B cell (primary cell): ENCODE measurements at regions of chr2 and their contacts with region 1.

Region 1: GRCh38 chr2:112884869-112885505 is 26.0 kb upstream of the IL37 start:
- DNase-seq: peak; percentile 65
- ATAC-seq: peak; percentile 75
- H3K4me3 ChIP-seq: no peak overlapping the region
- H3K4me3 Mint-ChIP-seq: no peak overlapping the region
- H3K27ac ChIP-seq: no peak overlapping the region
- H3K27ac Mint-ChIP-seq: no peak overlapping the region
- H3K4me1 ChIP-seq: peaks cover 7 to 15% of the 10 kb centered on the region in 2 donors
- H3K4me1 Mint-ChIP-seq: peaks cover 14% of the 10 kb centered on the region
- H3K27me3 ChIP-seq: no peaks in the 10 kb centered on the region
- H3K27me3 Mint-ChIP-seq: no peaks in the 10 kb centered on the region
- CTCF ChIP-seq: peak; percentile 90

Region 2: DNA sequence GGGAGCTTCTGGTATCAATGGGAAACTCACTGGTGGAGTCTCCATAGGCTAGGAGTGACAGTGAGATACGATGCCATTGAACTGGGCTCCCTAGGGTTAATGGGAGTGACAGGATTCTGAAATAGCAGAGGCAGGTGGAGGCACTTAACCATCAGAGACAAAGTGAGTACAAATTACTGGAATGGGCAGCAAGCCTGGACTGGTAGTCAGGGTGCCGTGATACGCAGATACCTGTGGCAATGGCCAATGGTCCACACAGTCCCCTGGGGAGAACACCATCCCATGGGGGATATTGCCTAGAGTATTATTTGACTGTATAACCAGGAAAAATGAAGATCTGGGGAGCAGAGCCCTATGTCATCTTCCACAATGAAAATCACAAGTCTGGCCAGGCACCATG is 283.2 kb before region 1 on chr2:
- CTCF ChIA-PET with region 1: interaction called, 5 read pairs
- POLR2A ChIA-PET with region 1: no interaction called
- intact Hi-C with region 1: loop called (anchors 1 kb)
- DNase-seq: no peak
- ATAC-seq: no peak
- H3K4me3 ChIP-seq: no peak overlapping the region
- H3K4me3 Mint-ChIP-seq: no peak overlapping the region
- H3K27ac ChIP-seq: no peak overlapping the region
- H3K27ac Mint-ChIP-seq: no peak overlapping the region
- H3K4me1 ChIP-seq: peaks cover 0 to 5% of the 10 kb centered on the region in 2 donors
- H3K4me1 Mint-ChIP-seq: peaks cover 5% of the 10 kb centered on the region
- H3K27me3 ChIP-seq: no peaks in the 10 kb centered on the region
- H3K27me3 Mint-ChIP-seq: no peaks in the 10 kb centered on the region
- CTCF ChIP-seq: no peak

Region 3: DNA sequence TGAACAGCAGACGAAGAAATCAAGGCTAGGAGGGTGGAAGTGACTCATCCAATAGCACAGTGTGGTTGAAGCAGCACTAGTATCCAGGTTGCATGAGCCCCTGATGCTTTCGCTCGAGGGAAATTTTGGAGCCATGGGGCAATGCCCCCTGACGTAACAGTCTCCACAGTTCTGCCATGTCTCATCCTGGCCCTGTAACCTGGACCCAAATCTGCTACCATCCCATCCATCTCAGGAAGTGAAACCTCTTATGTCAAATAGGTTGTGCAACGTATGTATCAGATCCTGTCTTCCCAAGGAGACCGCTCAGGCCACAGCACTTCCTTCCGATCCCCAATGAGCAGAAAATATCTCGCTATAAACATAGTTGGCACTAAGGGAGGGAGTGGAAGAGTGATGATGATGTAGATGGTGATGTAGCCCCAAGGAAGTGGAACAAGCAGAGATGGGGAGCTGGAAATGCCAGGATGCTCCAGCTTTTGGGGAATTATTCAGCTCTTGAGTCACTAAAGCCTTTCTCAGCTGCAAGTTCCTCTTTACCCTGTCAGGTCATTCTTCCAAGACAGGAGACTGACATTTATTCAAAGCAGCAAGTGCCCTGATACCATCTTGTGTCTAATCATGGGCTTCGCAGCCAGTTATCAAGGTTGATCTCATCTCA is 45.5 kb before region 1 on chr2:
- CTCF ChIA-PET with region 1: interaction called, 4 read pairs
- POLR2A ChIA-PET with region 1: no interaction called
- intact Hi-C with region 1: loop called (anchors 5 kb)
- DNase-seq: peak; percentile 50
- ATAC-seq: peak; percentile 21
- H3K4me3 ChIP-seq: no peak overlapping the region
- H3K4me3 Mint-ChIP-seq: peak overlapping the region; percentile 15
- H3K27ac ChIP-seq: no peak overlapping the region
- H3K27ac Mint-ChIP-seq: no peak overlapping the region
- H3K4me1 ChIP-seq: peaks cover 59 to 63% of the 10 kb centered on the region in 2 donors
- H3K4me1 Mint-ChIP-seq: peaks cover 55% of the 10 kb centered on the region
- H3K27me3 ChIP-seq: no peaks in the 10 kb centered on the region
- H3K27me3 Mint-ChIP-seq: no peaks in the 10 kb centered on the region
- CTCF ChIP-seq: no peak

Region 4: DNA sequence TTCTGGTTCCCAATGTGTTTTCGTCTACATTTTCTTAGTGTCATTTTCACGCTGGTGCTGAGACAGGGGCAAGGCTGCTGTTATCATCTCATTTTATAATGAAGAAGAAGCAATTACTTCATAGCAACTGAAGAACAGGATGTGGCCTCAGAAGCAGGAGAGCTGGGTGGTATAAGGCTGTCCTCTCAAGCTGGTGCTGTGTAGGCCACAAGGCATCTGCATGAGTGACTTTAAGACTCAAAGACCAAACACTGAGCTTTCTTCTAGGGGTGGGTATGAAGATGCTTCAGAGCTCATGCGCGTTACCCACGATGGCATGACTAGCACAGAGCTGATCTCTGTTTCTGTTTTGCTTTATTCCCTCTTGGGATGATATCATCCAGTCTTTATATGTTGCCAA is 100.1 kb after region 1 on chr2:
- CTCF ChIA-PET with region 1: no interaction called
- POLR2A ChIA-PET with region 1: no interaction called
- intact Hi-C with region 1: no loop called
- DNase-seq: no peak
- ATAC-seq: no peak
- H3K4me3 ChIP-seq: no peak overlapping the region
- H3K4me3 Mint-ChIP-seq: no peak overlapping the region
- H3K27ac ChIP-seq: no peak overlapping the region
- H3K27ac Mint-ChIP-seq: no peak overlapping the region
- H3K4me1 ChIP-seq: no peaks in the 10 kb centered on the region
- H3K4me1 Mint-ChIP-seq: no peaks in the 10 kb centered on the region
- H3K27me3 ChIP-seq: no peaks in the 10 kb centered on the region
- H3K27me3 Mint-ChIP-seq: no peaks in the 10 kb centered on the region
- CTCF ChIP-seq: no peak